PC-3 (cell line): ENCODE measurements at regions of chrX and their contacts with region 1.

Region 1: GRCh38 chrX:55210931-55211681 is 9.0 kb upstream of the PAGE5 start:
- DNase-seq: peak; percentile 20
- ATAC-seq: no peak
- H3K4me3 ChIP-seq: no peak overlapping the region
- H3K27ac ChIP-seq: no peak overlapping the region
- H3K4me1 ChIP-seq: no peaks in the 10 kb centered on the region
- H3K27me3 ChIP-seq: no peaks in the 10 kb centered on the region
- CTCF ChIP-seq: no peak; the same call in 1 of the 2 replicates

Region 2: GRCh38 chrX:54529552-54530357 is 681.4 kb before region 1 on chrX and contains the start of gene GNL3L:
- CTCF ChIA-PET with region 1: no interaction called
- POLR2A ChIA-PET with region 1: interaction called, 15 read pairs
- intact Hi-C with region 1: no loop called
- DNase-seq: peak; percentile 83
- ATAC-seq: peak; percentile 84
- H3K4me3 ChIP-seq: peak within 1 kb of the TSS; percentile 82
- H3K27ac ChIP-seq: peak within 1 kb of the TSS; percentile 83
- H3K4me1 ChIP-seq: peaks cover 20% of the 10 kb centered on the region
- H3K27me3 ChIP-seq: no peaks in the 10 kb centered on the region
- CTCF ChIP-seq: no peak
- total RNA-seq, gene GNL3L: 50.3 and 63.7 TPM in 2 replicates

Region 3: GRCh38 chrX:54964766-54965497 is 246.2 kb before region 1 on chrX:
- CTCF ChIA-PET with region 1: no interaction called
- POLR2A ChIA-PET with region 1: no interaction called
- intact Hi-C with region 1: no loop called
- DNase-seq: no peak
- ATAC-seq: no peak
- H3K4me3 ChIP-seq: no peak overlapping the region
- H3K27ac ChIP-seq: no peak overlapping the region
- H3K4me1 ChIP-seq: no peaks in the 10 kb centered on the region
- H3K27me3 ChIP-seq: no peaks in the 10 kb centered on the region
- CTCF ChIP-seq: no peak

Region 4: DNA sequence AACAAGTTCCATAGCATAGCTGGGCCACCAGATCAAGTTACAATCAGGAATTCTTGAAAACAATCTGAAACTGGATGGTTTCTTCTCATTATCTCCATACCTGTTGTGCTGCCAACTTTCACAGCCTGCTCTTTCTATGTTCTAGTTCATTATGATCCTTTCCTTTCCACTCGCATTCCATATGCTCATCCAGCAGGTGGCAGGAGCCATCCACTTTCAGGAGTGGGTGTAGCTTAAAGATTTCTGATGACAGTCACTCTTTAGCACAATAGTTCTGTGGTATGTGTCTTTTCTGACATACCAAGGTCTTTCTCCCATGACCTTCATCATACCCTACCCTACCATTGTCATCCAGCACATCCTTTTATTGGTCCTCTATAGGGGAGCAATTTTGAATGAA is 75.9 kb before region 1 on chrX:
- CTCF ChIA-PET with region 1: no interaction called
- POLR2A ChIA-PET with region 1: no interaction called
- intact Hi-C with region 1: loop called (anchors 1 kb)
- DNase-seq: peak; percentile 55
- ATAC-seq: peak; percentile 67
- H3K4me3 ChIP-seq: no peak overlapping the region
- H3K27ac ChIP-seq: no peak overlapping the region
- H3K4me1 ChIP-seq: no peaks in the 10 kb centered on the region
- H3K27me3 ChIP-seq: no peaks in the 10 kb centered on the region; the same call in 1 of the 2 replicates
- CTCF ChIP-seq: peak; percentile 73